ENCODE measurements at regions of chr6 and their contacts with region 1.

Region 1: DNA sequence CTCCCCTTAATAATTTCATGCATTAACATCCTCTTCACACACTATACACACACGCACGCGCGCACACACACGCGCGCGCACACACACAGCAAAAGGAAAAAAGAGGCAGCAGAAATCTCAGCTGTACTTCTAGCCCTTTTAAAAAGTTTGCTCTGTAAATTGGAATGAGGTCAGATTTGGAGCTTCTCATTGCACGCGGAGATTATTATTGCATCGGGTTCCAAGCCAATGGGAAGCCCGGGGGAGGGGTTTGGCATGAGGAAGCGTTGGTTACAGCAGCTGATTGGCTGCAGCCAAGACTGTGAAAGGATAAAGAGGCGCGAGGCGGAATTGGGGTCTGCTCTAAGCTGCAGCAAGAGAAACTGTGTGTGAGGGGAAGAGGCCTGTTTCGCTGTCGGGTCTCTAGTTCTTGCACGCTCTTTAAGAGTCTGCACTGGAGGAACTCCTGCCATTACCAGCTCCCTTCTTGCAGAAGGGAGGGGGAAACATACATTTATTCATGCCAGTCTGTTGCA is at the start of gene SOX4:
- DNase-seq: peak; percentile 62
- ATAC-seq: peak; percentile 82
- H3K4me3 Mint-ChIP-seq: no peak within 1 kb of the TSS
- H3K27ac Mint-ChIP-seq: peak within 1 kb of the TSS; percentile 84
- H3K4me1 Mint-ChIP-seq: peaks cover 25% of the 10 kb centered on the region
- H3K27me3 Mint-ChIP-seq: peaks cover 3% of the 10 kb centered on the region
- CTCF ChIP-seq: no peak
- total RNA-seq, gene SOX4: 3.4 and 3.5 TPM in 2 replicates

Region 2: GRCh38 chr6:20212392-20213217 is 1380.9 kb before region 1 on chr6 and contains the start of gene MBOAT1:
- CTCF ChIA-PET with region 1: no interaction called
- POLR2A ChIA-PET with region 1: no interaction called
- intact Hi-C with region 1: loop called (anchors 5 kb)
- DNase-seq: peak; percentile 43
- ATAC-seq: peak; percentile 73
- H3K4me3 Mint-ChIP-seq: peak within 1 kb of the TSS; percentile 90
- H3K27ac Mint-ChIP-seq: peak within 1 kb of the TSS; percentile 85
- H3K4me1 Mint-ChIP-seq: peaks cover 22% of the 10 kb centered on the region
- H3K27me3 Mint-ChIP-seq: peaks cover 3% of the 10 kb centered on the region
- CTCF ChIP-seq: no peak
- total RNA-seq, gene MBOAT1: 3.5 and 3.7 TPM in 2 replicates

Region 3: DNA sequence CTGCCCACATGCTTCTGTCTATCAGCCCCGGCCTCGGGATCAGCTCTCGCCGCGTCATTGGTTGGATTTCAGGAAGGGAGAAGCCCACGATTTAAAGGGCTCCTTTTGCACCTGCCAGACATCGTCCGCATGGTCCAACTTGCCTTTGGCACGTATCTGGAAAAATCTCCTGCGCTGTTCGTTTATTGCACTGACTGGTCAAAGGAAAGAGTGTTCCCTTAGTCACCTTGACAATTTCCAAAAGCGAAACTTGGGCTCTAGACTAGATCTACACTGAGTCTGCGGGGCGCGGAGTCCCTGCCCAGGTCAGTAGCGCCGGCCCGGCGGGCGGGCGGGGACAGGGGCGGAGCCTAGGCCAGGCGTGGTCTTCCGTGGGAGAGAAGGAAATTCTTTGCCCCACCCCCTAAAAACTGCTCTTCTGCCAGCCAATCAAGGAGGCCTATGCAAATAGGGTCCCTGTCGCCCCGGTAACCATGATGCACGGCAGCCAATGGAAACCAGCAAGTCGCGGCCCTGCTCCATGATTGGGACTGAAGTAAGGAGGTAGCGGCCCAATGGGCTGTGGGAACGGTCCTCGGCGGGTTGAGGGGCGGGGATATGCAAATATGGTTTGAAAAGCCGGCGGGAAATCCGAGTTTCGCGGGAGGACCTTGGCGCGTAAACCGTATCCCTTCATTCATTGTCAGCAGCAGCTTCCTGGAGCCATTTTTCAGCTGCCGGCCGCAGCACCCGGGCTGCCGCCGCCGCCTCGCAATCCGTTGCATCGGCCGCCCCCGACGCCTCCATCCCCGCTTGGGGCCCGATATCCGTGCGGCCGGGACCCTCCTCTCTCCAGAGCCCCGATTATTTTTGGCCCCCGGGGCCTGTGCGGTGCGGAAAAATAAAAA is 1192.0 kb before region 1 on chr6 and contains the start of gene E2F3:
- CTCF ChIA-PET with region 1: no interaction called
- POLR2A ChIA-PET with region 1: interaction called, 5 read pairs
- intact Hi-C with region 1: loop called (anchors 1 kb)
- DNase-seq: peak; percentile 93
- ATAC-seq: peak; percentile 81
- H3K4me3 Mint-ChIP-seq: peak within 1 kb of the TSS; percentile 96
- H3K27ac Mint-ChIP-seq: peak within 1 kb of the TSS; percentile 79
- H3K4me1 Mint-ChIP-seq: peaks cover 25% of the 10 kb centered on the region
- H3K27me3 Mint-ChIP-seq: no peaks in the 10 kb centered on the region
- CTCF ChIP-seq: no peak
- total RNA-seq, gene E2F3: 14.0 and 15.6 TPM in 2 replicates

Region 4: GRCh38 chr6:20789162-20789561 is 804.3 kb before region 1 on chr6:
- CTCF ChIA-PET with region 1: interaction called, 4 read pairs
- POLR2A ChIA-PET with region 1: no interaction called
- intact Hi-C with region 1: loop called (anchors 1 kb)
- DNase-seq: no peak
- ATAC-seq: no peak
- H3K4me3 Mint-ChIP-seq: no peak overlapping the region
- H3K27ac Mint-ChIP-seq: no peak overlapping the region
- H3K4me1 Mint-ChIP-seq: no peaks in the 10 kb centered on the region
- H3K27me3 Mint-ChIP-seq: no peaks in the 10 kb centered on the region
- CTCF ChIP-seq: no peak

Region 5: GRCh38 chr6:21003780-21004541 is 589.5 kb before region 1 on chr6:
- CTCF ChIA-PET with region 1: no interaction called
- POLR2A ChIA-PET with region 1: interaction called, 12 read pairs
- intact Hi-C with region 1: loop called (anchors 5 kb)
- DNase-seq: no peak
- ATAC-seq: peak; percentile 59
- H3K4me3 Mint-ChIP-seq: peak overlapping the region; percentile 13
- H3K27ac Mint-ChIP-seq: peak overlapping the region; percentile 80
- H3K4me1 Mint-ChIP-seq: peaks cover 36% of the 10 kb centered on the region
- H3K27me3 Mint-ChIP-seq: no peaks in the 10 kb centered on the region
- CTCF ChIP-seq: no peak

Region 6: GRCh38 chr6:21354805-21355238 is 238.6 kb before region 1 on chr6:
- CTCF ChIA-PET with region 1: no interaction called
- POLR2A ChIA-PET with region 1: no interaction called
- intact Hi-C with region 1: loop called (anchors 5 kb)
- DNase-seq: no peak
- ATAC-seq: no peak
- H3K4me3 Mint-ChIP-seq: no peak overlapping the region
- H3K27ac Mint-ChIP-seq: no peak overlapping the region
- H3K4me1 Mint-ChIP-seq: no peaks in the 10 kb centered on the region
- H3K27me3 Mint-ChIP-seq: no peaks in the 10 kb centered on the region
- CTCF ChIP-seq: no peak

Region 7: GRCh38 chr6:21722510-21722909 is 129.0 kb after region 1 on chr6:
- CTCF ChIA-PET with region 1: no interaction called
- POLR2A ChIA-PET with region 1: no interaction called
- intact Hi-C with region 1: no loop called
- DNase-seq: no peak
- ATAC-seq: no peak
- H3K4me3 Mint-ChIP-seq: no peak overlapping the region
- H3K27ac Mint-ChIP-seq: no peak overlapping the region
- H3K4me1 Mint-ChIP-seq: no peaks in the 10 kb centered on the region
- H3K27me3 Mint-ChIP-seq: no peaks in the 10 kb centered on the region
- CTCF ChIP-seq: no peak

Region 8: GRCh38 chr6:21738184-21739119 is 145.0 kb after region 1 on chr6:
- CTCF ChIA-PET with region 1: no interaction called
- POLR2A ChIA-PET with region 1: no interaction called
- intact Hi-C with region 1: no loop called
- DNase-seq: no peak
- ATAC-seq: no peak
- H3K4me3 Mint-ChIP-seq: no peak overlapping the region
- H3K27ac Mint-ChIP-seq: no peak overlapping the region
- H3K4me1 Mint-ChIP-seq: no peaks in the 10 kb centered on the region
- H3K27me3 Mint-ChIP-seq: no peaks in the 10 kb centered on the region
- CTCF ChIP-seq: no peak

Region 9: GRCh38 chr6:21935561-21936028 is 342.1 kb after region 1 on chr6:
- CTCF ChIA-PET with region 1: no interaction called
- POLR2A ChIA-PET with region 1: no interaction called
- intact Hi-C with region 1: loop called (anchors 2 kb)
- DNase-seq: no peak
- ATAC-seq: no peak
- H3K4me3 Mint-ChIP-seq: no peak overlapping the region
- H3K27ac Mint-ChIP-seq: no peak overlapping the region
- H3K4me1 Mint-ChIP-seq: no peaks in the 10 kb centered on the region
- H3K27me3 Mint-ChIP-seq: no peaks in the 10 kb centered on the region
- CTCF ChIP-seq: no peak